ENCODE measurements at regions of chr21 and their contacts with region 1.

Region 1: GRCh38 chr21:37563641-37564340 is 197.2 kb downstream of the DYRK1A start:
- DNase-seq: peak; percentile 94 to 98 (median 97)
- H3K4me3 ChIP-seq: peak overlapping the region; percentile 51 to 93 (median 74)
- H3K27ac ChIP-seq: peak overlapping the region; percentile 97 to 99
- H3K4me1 ChIP-seq: peaks cover 4 to 36% (median 30%) of the 10 kb centered on the region in 4 experiments
- H3K27me3 ChIP-seq: no peaks in the 10 kb centered on the region

Region 2: GRCh38 chr21:37551331-37551992 is 12.3 kb before region 1 on chr21:
- CTCF ChIA-PET with region 1: interaction called, 18 read pairs
- POLR2A ChIA-PET with region 1: interaction called, 6 read pairs
- DNase-seq: no peak
- H3K4me3 ChIP-seq: no peak overlapping the region
- H3K27ac ChIP-seq: no peak overlapping the region
- H3K4me1 ChIP-seq: peaks cover 13 to 42% (median 34%) of the 10 kb centered on the region in 4 experiments
- H3K27me3 ChIP-seq: no peaks in the 10 kb centered on the region

Region 3: GRCh38 chr21:37579356-37579755 is 15.6 kb after region 1 on chr21:
- CTCF ChIA-PET with region 1: interaction called, 11 read pairs
- POLR2A ChIA-PET with region 1: no interaction called
- DNase-seq: no peak
- H3K4me3 ChIP-seq: no peak overlapping the region
- H3K27ac ChIP-seq: no peak overlapping the region
- H3K4me1 ChIP-seq: peaks cover 0 to 5% (median 5%) of the 10 kb centered on the region in 4 experiments
- H3K27me3 ChIP-seq: no peaks in the 10 kb centered on the region